ENCODE measurements at regions of chr14 and their contacts with region 1.

Region 1: DNA sequence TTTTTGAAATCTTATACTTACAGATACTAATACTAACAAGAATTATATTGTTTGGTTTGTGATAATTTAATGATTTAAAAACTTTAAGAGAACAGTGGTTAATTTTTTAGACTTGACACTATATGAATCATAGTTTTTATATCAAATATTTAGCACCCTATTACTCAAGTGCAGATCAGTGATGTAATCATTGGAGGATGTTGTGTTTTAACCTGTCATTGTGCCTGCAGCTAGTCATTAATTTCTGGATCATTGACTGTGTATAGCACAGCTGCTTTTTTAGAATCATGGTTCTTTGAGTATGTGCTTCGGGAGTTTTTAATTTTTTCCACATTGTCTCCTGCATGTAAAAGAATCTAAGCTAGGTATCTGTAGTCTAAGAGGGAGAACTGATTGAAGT is 17.3 kb downstream of the ARID4A start:
- DNase-seq: no peak
- H3K4me3 ChIP-seq: no peak overlapping the region
- H3K27ac ChIP-seq: no peak overlapping the region
- H3K4me1 ChIP-seq: no peaks in the 10 kb centered on the region
- H3K27me3 ChIP-seq: no peaks in the 10 kb centered on the region
- CTCF ChIP-seq: no peak

Region 2: GRCh38 chr14:58362798-58363412 is 47.3 kb after region 1 on chr14:
- CTCF ChIA-PET with region 1: no interaction called
- POLR2A ChIA-PET with region 1: interaction called, 19 read pairs
- intact Hi-C with region 1: no loop called
- DNase-seq: no peak
- H3K4me3 ChIP-seq: no peak overlapping the region
- H3K27ac ChIP-seq: no peak overlapping the region
- H3K4me1 ChIP-seq: no peaks in the 10 kb centered on the region
- H3K27me3 ChIP-seq: no peaks in the 10 kb centered on the region
- CTCF ChIP-seq: peak; percentile 53